ENCODE measurements at regions of chr1 and their contacts with region 1.

Region 1: GRCh38 chr1:212782422-212783154 is 9.0 kb downstream of the NSL1 start:
- DNase-seq: no peak
- ATAC-seq: peak; percentile 68
- H3K4me3 ChIP-seq: no peak overlapping the region
- H3K27ac ChIP-seq: no peak overlapping the region
- H3K4me1 ChIP-seq: peaks cover 10% of the 10 kb centered on the region; the same call in 1 of the 2 replicates
- H3K27me3 ChIP-seq: no peaks in the 10 kb centered on the region
- CTCF ChIP-seq: peak; percentile 53 to 71 (median 64); a peak in 5 of 6 replicates
- EP300 ChIP-seq: no peak
- POLR2A ChIP-seq: no peak
- RAD21 ChIP-seq: peak; percentile 81

Region 2: GRCh38 chr1:212613455-212614390 is 168.9 kb before region 1 on chr1:
- CTCF ChIA-PET with region 1: interaction called, 5 read pairs
- POLR2A ChIA-PET with region 1: interaction called, 3 read pairs
- RAD21 ChIA-PET with region 1: interaction called, 4 read pairs
- SMC1A ChIA-PET with region 1: interaction called, 14 read pairs
- in situ Hi-C with region 1: no loop called
- intact Hi-C with region 1: loop called (anchors 2 kb)
- DNase-seq: no peak
- ATAC-seq: peak; percentile 8
- H3K4me3 ChIP-seq: peak overlapping the region; percentile 65; the same call in 1 of the 2 replicates
- H3K27ac ChIP-seq: peak overlapping the region; percentile 66
- H3K4me1 ChIP-seq: peaks cover 27% of the 10 kb centered on the region
- H3K27me3 ChIP-seq: no peaks in the 10 kb centered on the region
- CTCF ChIP-seq: no peak
- EP300 ChIP-seq: no peak
- POLR2A ChIP-seq: no peak
- RAD21 ChIP-seq: no peak

Region 3: GRCh38 chr1:212671342-212672031 is 111.1 kb before region 1 on chr1:
- CTCF ChIA-PET with region 1: interaction called, 42 read pairs
- POLR2A ChIA-PET with region 1: no interaction called
- RAD21 ChIA-PET with region 1: interaction called, 15 read pairs
- SMC1A ChIA-PET with region 1: interaction called, 80 read pairs
- in situ Hi-C with region 1: no loop called
- intact Hi-C with region 1: no loop called
- DNase-seq: no peak
- ATAC-seq: peak; percentile 65
- H3K4me3 ChIP-seq: no peak overlapping the region
- H3K27ac ChIP-seq: no peak overlapping the region
- H3K4me1 ChIP-seq: peaks cover 34% of the 10 kb centered on the region
- H3K27me3 ChIP-seq: no peaks in the 10 kb centered on the region
- CTCF ChIP-seq: no peak
- EP300 ChIP-seq: no peak
- POLR2A ChIP-seq: no peak
- RAD21 ChIP-seq: no peak

Region 4: GRCh38 chr1:212677136-212677535 is 105.5 kb before region 1 on chr1:
- CTCF ChIA-PET with region 1: interaction called, 13 read pairs
- POLR2A ChIA-PET with region 1: no interaction called
- RAD21 ChIA-PET with region 1: interaction called, 7 read pairs
- SMC1A ChIA-PET with region 1: interaction called, 12 read pairs
- in situ Hi-C with region 1: no loop called
- intact Hi-C with region 1: no loop called
- DNase-seq: no peak
- ATAC-seq: no peak
- H3K4me3 ChIP-seq: no peak overlapping the region
- H3K27ac ChIP-seq: no peak overlapping the region
- H3K4me1 ChIP-seq: peaks cover 43% of the 10 kb centered on the region
- H3K27me3 ChIP-seq: no peaks in the 10 kb centered on the region
- CTCF ChIP-seq: no peak
- EP300 ChIP-seq: no peak
- POLR2A ChIP-seq: no peak
- RAD21 ChIP-seq: no peak

Region 5: DNA sequence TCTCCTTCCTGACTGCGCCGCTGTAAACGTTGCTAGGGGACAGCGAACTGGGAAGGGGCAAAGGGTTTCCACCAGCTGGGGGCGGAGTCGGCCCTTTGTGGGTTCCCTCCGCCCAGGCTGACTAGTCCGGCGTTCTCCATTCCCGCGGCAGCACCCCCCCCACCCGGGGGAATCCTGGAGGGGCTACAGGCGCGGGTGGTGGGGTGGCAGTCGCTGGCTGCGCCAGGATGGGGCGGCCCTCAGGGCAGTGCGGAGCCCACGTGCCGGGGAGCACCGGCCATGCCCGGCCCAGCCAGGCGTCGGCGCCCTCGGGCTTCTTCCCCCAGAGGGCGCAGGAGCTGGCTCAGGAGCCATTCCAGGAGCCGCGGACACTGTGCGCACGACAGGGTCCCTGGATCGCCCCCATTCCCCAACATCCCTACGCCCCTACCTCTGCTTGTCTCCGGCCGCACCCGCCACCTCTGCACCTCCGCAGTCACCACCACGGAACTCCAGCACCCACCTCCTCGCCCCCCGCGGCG is 83.4 kb before region 1 on chr1:
- CTCF ChIA-PET with region 1: interaction called, 21 read pairs
- POLR2A ChIA-PET with region 1: interaction called, 6 read pairs
- RAD21 ChIA-PET with region 1: interaction called, 14 read pairs
- SMC1A ChIA-PET with region 1: interaction called, 11 read pairs
- in situ Hi-C with region 1: no loop called
- intact Hi-C with region 1: loop called (anchors 1 kb)
- DNase-seq: no peak
- ATAC-seq: peak; percentile 81
- H3K4me3 ChIP-seq: peak overlapping the region; percentile 82
- H3K27ac ChIP-seq: no peak overlapping the region
- H3K4me1 ChIP-seq: peaks cover 27% of the 10 kb centered on the region
- H3K27me3 ChIP-seq: no peaks in the 10 kb centered on the region
- CTCF ChIP-seq: peak; percentile 48 to 79 (median 71)
- EP300 ChIP-seq: no peak
- POLR2A ChIP-seq: no peak
- RAD21 ChIP-seq: peak; percentile 51